H1 (cell line): ENCODE measurements at regions of chr6 and their contacts with region 1.

Region 1: GRCh38 chr6:26216356-26216885 is 129.2 kb downstream of the HFE start:
- DNase-seq: no peak
- H3K4me3 ChIP-seq: peak overlapping the region; percentile 87 to 98 (median 90)
- H3K27ac ChIP-seq: peak overlapping the region; percentile 97
- H3K4me1 ChIP-seq: peaks cover 0 to 8% (median 1%) of the 10 kb centered on the region in 4 experiments; a peak in 4 of 7 replicates
- H3K27me3 ChIP-seq: no peaks in the 10 kb centered on the region
- CTCF ChIP-seq: no peak
- EP300 ChIP-seq: no peak
- POLR2A ChIP-seq: peak; percentile 96 to 98
- RAD21 ChIP-seq: no peak

Region 2: GRCh38 chr6:26031595-26032339 is 184.7 kb before region 1 on chr6:
- CTCF ChIA-PET with region 1: interaction called, 3 read pairs
- POLR2A ChIA-PET with region 1: interaction called, 99 read pairs
- DNase-seq: peak; percentile 82 to 88
- H3K4me3 ChIP-seq: peak overlapping the region; percentile 81 to 95 (median 92)
- H3K27ac ChIP-seq: peak overlapping the region; percentile 96
- H3K4me1 ChIP-seq: peaks cover 2 to 18% (median 13%) of the 10 kb centered on the region in 4 experiments; a peak in 5 of 7 replicates
- H3K27me3 ChIP-seq: no peaks in the 10 kb centered on the region
- CTCF ChIP-seq: no peak
- EP300 ChIP-seq: peak in 1 of 2 experiments; percentile 2; a peak in 1 of 3 replicates
- POLR2A ChIP-seq: peak; percentile 99 to 100
- RAD21 ChIP-seq: no peak

Region 3: DNA sequence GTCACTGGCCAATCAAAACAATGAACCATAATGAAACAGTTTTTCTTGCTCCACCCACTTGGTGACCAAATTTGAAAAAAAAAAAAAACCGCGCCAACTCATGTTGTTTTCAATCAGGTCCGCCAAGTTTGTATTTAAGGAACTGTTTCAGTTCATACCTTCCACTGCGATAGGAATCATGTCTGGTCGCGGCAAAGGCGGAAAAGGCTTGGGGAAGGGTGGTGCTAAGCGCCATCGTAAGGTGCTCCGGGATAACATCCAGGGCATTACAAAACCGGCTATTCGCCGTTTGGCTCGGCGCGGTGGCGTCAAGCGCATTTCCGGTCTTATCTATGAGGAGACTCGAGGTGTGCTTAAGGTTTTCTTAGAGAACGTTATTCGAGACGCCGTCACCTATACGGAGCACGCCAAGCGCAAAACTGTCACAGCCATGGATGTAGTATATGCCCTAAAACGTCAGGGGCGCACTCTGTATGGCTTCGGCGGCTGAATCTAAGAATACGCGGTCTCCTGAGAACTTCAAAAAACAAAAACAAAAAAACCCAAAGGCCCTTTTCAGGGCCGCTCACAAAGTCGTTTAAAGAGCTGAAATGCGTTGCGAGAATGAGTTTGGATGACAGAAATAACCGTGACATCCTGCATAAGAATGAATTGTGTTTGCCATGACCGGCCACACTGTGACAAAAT is 112.5 kb before region 1 on chr6:
- CTCF ChIA-PET with region 1: interaction called, 4 read pairs
- POLR2A ChIA-PET with region 1: interaction called, 28 read pairs
- DNase-seq: peak; percentile 80 to 83
- H3K4me3 ChIP-seq: peak overlapping the region; percentile 41 to 63 (median 52)
- H3K27ac ChIP-seq: peak overlapping the region; percentile 92
- H3K4me1 ChIP-seq: peaks cover 0 to 3% (median 0%) of the 10 kb centered on the region in 4 experiments; a peak in 2 of 7 replicates
- H3K27me3 ChIP-seq: no peaks in the 10 kb centered on the region
- CTCF ChIP-seq: peak in 2 of 3 experiments; percentile 26 to 37; a peak in 3 of 4 replicates
- EP300 ChIP-seq: peak in 1 of 2 experiments; percentile 96; a peak in 1 of 3 replicates
- POLR2A ChIP-seq: peak; percentile 98 to 99
- RAD21 ChIP-seq: no peak; a peak in 1 of 4 replicates

Region 4: GRCh38 chr6:26196846-26197648 is 19.4 kb before region 1 on chr6:
- CTCF ChIA-PET with region 1: interaction called, 14 read pairs
- POLR2A ChIA-PET with region 1: interaction called, 2,731 read pairs
- DNase-seq: peak in 1 of 2 experiments; percentile 76
- H3K4me3 ChIP-seq: peak overlapping the region; percentile 85 to 98 (median 89)
- H3K27ac ChIP-seq: peak overlapping the region; percentile 82
- H3K4me1 ChIP-seq: peaks cover 0 to 1% (median 0%) of the 10 kb centered on the region in 4 experiments; a peak in 1 of 7 replicates
- H3K27me3 ChIP-seq: no peaks in the 10 kb centered on the region
- CTCF ChIP-seq: no peak
- EP300 ChIP-seq: no peak
- POLR2A ChIP-seq: peak; percentile 99
- RAD21 ChIP-seq: no peak

Region 5: GRCh38 chr6:26280407-26280806 is 64.0 kb after region 1 on chr6:
- CTCF ChIA-PET with region 1: no interaction called
- POLR2A ChIA-PET with region 1: interaction called, 131 read pairs
- DNase-seq: no peak
- H3K4me3 ChIP-seq: no peak overlapping the region
- H3K27ac ChIP-seq: no peak overlapping the region
- H3K4me1 ChIP-seq: peaks cover 0 to 9% (median 3%) of the 10 kb centered on the region in 4 experiments; a peak in 3 of 7 replicates
- H3K27me3 ChIP-seq: no peaks in the 10 kb centered on the region
- CTCF ChIP-seq: no peak
- EP300 ChIP-seq: no peak
- POLR2A ChIP-seq: no peak; a peak in 1 of 3 replicates
- RAD21 ChIP-seq: no peak

Region 6: DNA sequence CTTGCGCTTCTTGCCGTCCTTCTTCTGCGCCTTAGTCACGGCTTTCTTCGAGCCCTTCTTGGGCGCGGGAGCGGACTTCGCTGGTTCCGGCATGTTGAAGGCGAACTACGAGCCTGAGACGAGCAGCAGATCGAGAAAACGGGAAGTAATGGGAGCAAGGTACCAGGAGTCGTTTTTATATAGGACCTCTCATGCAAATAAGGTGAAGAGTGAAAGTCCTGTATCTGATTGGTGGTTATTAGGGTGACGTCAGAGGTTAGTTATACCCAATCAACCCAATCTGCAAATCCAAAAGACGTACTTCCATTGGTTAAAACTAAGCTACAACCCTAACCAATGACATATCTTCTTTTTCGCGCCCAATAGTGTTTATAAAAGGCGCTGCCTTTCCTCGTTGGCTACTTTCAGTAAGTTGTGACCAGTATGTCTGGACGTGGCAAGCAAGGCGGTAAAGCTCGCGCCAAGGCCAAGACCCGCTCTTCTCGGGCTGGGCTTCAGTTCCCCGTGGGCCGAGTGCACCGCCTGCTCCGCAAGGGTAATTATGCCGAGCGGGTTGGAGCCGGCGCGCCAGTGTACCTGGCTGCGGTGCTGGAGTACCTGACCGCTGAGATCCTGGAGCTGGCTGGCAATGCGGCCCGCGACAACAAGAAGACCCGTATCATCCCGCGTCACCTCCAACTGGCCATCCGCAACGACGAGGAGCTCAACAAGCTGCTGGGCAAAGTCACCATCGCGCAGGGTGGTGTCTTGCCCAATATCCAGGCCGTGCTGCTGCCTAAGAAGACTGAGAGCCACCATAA is 930.5 kb after region 1 on chr6:
- CTCF ChIA-PET with region 1: no interaction called
- POLR2A ChIA-PET with region 1: interaction called, 57 read pairs
- DNase-seq: peak; percentile 89 to 93
- H3K4me3 ChIP-seq: peak overlapping the region; percentile 60 to 86 (median 76)
- H3K27ac ChIP-seq: peak overlapping the region; percentile 98
- H3K4me1 ChIP-seq: peaks cover 0 to 11% (median 1%) of the 10 kb centered on the region in 4 experiments; a peak in 4 of 7 replicates
- H3K27me3 ChIP-seq: no peaks in the 10 kb centered on the region
- CTCF ChIP-seq: no peak
- EP300 ChIP-seq: 0 out of 3 replicates have a peak, but pooled peaks of 1 of the 2 experiments have one; percentile 16
- POLR2A ChIP-seq: peak; percentile 98 to 99
- RAD21 ChIP-seq: no peak